GM13976 (cell line): ENCODE measurements at regions of chr19 and their contacts with region 1.

Region 1: DNA sequence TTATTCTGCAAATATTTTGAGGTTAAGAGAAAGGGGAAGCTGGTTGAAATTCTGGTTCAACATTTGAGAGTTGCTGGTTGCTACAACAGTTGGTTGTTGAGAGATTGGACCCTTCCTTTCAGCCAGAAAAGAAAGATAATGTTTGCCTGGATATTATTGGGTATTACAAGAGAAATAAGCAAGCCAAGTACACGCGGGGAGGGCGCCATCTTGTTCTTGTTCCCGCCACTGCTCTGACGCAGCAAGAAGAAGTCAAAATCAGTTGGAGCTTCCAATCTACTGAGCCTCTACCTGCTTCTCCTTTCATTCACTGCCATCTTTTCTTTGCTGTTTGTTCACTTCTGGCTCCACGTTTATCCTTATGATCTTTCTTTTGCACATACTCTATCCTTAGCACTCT is 18.4 kb downstream of the BSPH1 start:
- DNase-seq: no peak
- CTCF ChIP-seq: no peak

Region 2: DNA sequence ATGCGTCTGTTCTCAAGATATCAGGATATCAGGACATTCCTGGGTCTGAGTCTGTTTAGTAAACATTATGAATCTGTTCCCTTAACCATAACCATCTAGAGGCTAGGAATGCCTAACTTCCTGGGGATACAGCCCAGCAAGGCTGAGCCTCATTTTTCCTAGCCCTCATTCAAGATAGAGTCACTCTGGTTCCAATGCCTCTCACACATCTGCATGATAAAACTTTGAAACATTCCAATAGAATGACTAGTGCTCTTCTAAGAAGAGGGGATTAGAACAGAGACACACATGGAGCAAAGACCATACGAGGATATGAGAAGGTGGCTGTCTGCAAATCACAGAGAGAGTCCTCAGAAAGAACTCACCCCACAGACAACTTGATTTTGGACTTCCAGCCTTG is 91.0 kb after region 1 on chr19:
- in situ Hi-C with region 1: no loop called
- DNase-seq: no peak
- CTCF ChIP-seq: no peak

Region 3: GRCh38 chr19:48085904-48086864 is 112.7 kb after region 1 on chr19:
- in situ Hi-C with region 1: loop called (anchors 25 kb)
- DNase-seq: no peak
- CTCF ChIP-seq: no peak